GM12878 (cell line): ENCODE measurements at regions of chr10 and their contacts with region 1.

Region 1: DNA sequence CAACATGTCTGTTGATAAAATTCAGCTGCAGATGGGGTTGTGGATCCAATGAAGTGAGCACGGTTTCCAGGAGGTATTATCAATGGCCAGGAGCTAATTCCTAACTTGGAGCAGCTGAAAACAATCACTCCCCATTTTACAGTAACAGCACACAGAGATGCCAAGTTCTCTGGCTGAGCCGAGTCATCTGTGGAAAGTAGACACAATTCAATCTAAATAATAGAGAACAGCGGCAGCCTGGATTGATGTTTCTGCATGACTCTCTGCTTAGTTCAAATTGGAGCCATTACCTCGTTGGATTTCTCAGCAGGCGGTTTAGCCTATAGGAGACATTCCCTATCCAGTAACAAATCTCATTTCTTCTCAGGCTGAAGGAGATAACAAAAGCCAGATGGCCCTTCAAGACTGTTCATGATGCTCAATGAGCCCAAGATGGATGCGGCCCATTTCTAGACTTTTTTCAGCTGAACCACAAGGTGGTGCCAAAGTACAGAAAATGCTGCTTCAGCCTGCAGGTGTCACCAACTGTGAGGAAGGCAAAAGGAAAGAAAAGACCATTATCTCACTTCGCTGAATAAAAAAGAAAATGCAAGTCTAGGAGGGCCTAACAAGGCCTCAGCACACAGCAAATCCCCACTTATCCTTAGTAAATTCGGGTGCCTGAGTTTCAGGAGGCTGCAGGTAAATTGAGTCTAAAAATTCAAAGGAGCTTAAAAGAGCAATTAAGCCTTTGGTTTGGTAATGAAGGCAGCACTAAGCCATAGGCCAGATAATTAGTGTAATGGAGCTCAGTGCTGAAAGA is 83.7 kb downstream of the SLC16A9 start:
- DNase-seq: peak; percentile 35
- ATAC-seq: peak; percentile 96
- H3K4me3 ChIP-seq: no peak overlapping the region
- H3K27ac ChIP-seq: no peak overlapping the region
- H3K4me1 ChIP-seq: no peaks in the 10 kb centered on the region; the same call in 1 of the 2 replicates
- H3K27me3 ChIP-seq: no peaks in the 10 kb centered on the region
- CTCF ChIP-seq: peak; percentile 66 to 93 (median 80); a peak in 5 of 6 replicates
- EP300 ChIP-seq: no peak
- POLR2A ChIP-seq: no peak
- RAD21 ChIP-seq: peak; percentile 100

Region 2: GRCh38 chr10:58781873-58782488 is 843.9 kb before region 1 on chr10:
- CTCF ChIA-PET with region 1: interaction called, 53 read pairs
- POLR2A ChIA-PET with region 1: no interaction called
- RAD21 ChIA-PET with region 1: interaction called, 3 read pairs
- SMC1A ChIA-PET with region 1: interaction called, 26 read pairs
- in situ Hi-C with region 1: no loop called
- intact Hi-C with region 1: loop called (anchors 1 kb)
- DNase-seq: peak; percentile 8
- ATAC-seq: peak; percentile 77
- H3K4me3 ChIP-seq: no peak overlapping the region
- H3K27ac ChIP-seq: no peak overlapping the region
- H3K4me1 ChIP-seq: no peaks in the 10 kb centered on the region
- H3K27me3 ChIP-seq: no peaks in the 10 kb centered on the region
- CTCF ChIP-seq: peak in 2 of 3 experiments; percentile 47 to 70; a peak in 4 of 6 replicates
- EP300 ChIP-seq: no peak
- POLR2A ChIP-seq: no peak
- RAD21 ChIP-seq: peak; percentile 77

Region 3: DNA sequence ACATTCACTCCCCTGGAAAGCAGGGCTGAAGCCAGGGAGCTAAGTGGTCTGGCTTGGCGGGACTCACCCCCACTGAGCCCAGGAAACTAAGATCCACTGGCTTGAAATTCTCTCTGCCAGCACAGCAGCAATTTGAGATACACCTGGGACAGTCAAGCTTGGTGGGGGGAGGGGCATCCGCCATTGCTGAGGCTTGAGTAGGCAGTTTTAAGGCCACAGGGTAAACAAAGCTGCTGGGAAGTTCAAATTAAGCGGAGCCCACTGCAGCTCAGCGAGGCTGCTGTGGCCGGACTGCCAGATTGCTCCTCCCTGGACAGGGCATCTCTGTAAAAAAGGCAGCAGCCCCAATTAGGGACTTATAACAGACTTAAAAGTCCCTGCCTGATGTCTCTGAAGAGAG is 155.4 kb before region 1 on chr10:
- CTCF ChIA-PET with region 1: no interaction called
- POLR2A ChIA-PET with region 1: no interaction called
- RAD21 ChIA-PET with region 1: no interaction called
- SMC1A ChIA-PET with region 1: no interaction called
- in situ Hi-C with region 1: no loop called
- intact Hi-C with region 1: no loop called
- DNase-seq: no peak
- ATAC-seq: no peak
- H3K4me3 ChIP-seq: no peak overlapping the region
- H3K27ac ChIP-seq: no peak overlapping the region
- H3K4me1 ChIP-seq: no peaks in the 10 kb centered on the region
- H3K27me3 ChIP-seq: no peaks in the 10 kb centered on the region
- CTCF ChIP-seq: no peak
- EP300 ChIP-seq: no peak
- POLR2A ChIP-seq: no peak
- RAD21 ChIP-seq: no peak

Region 4: GRCh38 chr10:59808896-59809643 is 183.1 kb after region 1 on chr10:
- CTCF ChIA-PET with region 1: interaction called, 8 read pairs
- POLR2A ChIA-PET with region 1: no interaction called
- RAD21 ChIA-PET with region 1: interaction called, 6 read pairs
- SMC1A ChIA-PET with region 1: interaction called, 3 read pairs
- in situ Hi-C with region 1: loop called (anchors 5 kb)
- intact Hi-C with region 1: loop called (anchors 1 kb)
- DNase-seq: peak; percentile 28
- ATAC-seq: peak; percentile 96
- H3K4me3 ChIP-seq: no peak overlapping the region
- H3K27ac ChIP-seq: no peak overlapping the region
- H3K4me1 ChIP-seq: no peaks in the 10 kb centered on the region
- H3K27me3 ChIP-seq: no peaks in the 10 kb centered on the region
- CTCF ChIP-seq: peak; percentile 72 to 81 (median 78)
- EP300 ChIP-seq: no peak
- POLR2A ChIP-seq: no peak
- RAD21 ChIP-seq: peak; percentile 81

Region 5: GRCh38 chr10:59906417-59907202 is 280.7 kb after region 1 on chr10 and contains the start of gene CCDC6:
- CTCF ChIA-PET with region 1: interaction called, 15 read pairs
- POLR2A ChIA-PET with region 1: no interaction called
- RAD21 ChIA-PET with region 1: interaction called, 8 read pairs
- SMC1A ChIA-PET with region 1: interaction called, 5 read pairs
- in situ Hi-C with region 1: no loop called
- intact Hi-C with region 1: loop called (anchors 2 kb)
- DNase-seq: no peak
- ATAC-seq: peak; percentile 86
- H3K4me3 ChIP-seq: peak within 1 kb of the TSS; percentile 94
- H3K27ac ChIP-seq: peak within 1 kb of the TSS; percentile 88
- H3K4me1 ChIP-seq: peaks cover 8% of the 10 kb centered on the region; the same call in 1 of the 2 replicates
- H3K27me3 ChIP-seq: no peaks in the 10 kb centered on the region
- CTCF ChIP-seq: peak; percentile 63 to 84 (median 83)
- EP300 ChIP-seq: 0 out of 4 replicates have a peak, but pooled peaks of 1 of the 2 experiments have one; percentile 8
- POLR2A ChIP-seq: peak; percentile 86
- RAD21 ChIP-seq: peak; percentile 88
- polyA plus RNA-seq, gene CCDC6: 11.8 to 12.3 TPM

Region 6: GRCh38 chr10:60099998-60100747 is 474.3 kb after region 1 on chr10:
- CTCF ChIA-PET with region 1: interaction called, 7 read pairs
- POLR2A ChIA-PET with region 1: no interaction called
- RAD21 ChIA-PET with region 1: no interaction called
- SMC1A ChIA-PET with region 1: interaction called, 4 read pairs
- in situ Hi-C with region 1: no loop called
- intact Hi-C with region 1: loop called (anchors 5 kb)
- DNase-seq: no peak
- ATAC-seq: peak; percentile 73
- H3K4me3 ChIP-seq: no peak overlapping the region
- H3K27ac ChIP-seq: no peak overlapping the region
- H3K4me1 ChIP-seq: peaks cover 9% of the 10 kb centered on the region
- H3K27me3 ChIP-seq: no peaks in the 10 kb centered on the region
- CTCF ChIP-seq: peak; percentile 51 to 55 (median 54); a peak in 5 of 6 replicates
- EP300 ChIP-seq: no peak
- POLR2A ChIP-seq: no peak
- RAD21 ChIP-seq: peak; percentile 66

Region 7: DNA sequence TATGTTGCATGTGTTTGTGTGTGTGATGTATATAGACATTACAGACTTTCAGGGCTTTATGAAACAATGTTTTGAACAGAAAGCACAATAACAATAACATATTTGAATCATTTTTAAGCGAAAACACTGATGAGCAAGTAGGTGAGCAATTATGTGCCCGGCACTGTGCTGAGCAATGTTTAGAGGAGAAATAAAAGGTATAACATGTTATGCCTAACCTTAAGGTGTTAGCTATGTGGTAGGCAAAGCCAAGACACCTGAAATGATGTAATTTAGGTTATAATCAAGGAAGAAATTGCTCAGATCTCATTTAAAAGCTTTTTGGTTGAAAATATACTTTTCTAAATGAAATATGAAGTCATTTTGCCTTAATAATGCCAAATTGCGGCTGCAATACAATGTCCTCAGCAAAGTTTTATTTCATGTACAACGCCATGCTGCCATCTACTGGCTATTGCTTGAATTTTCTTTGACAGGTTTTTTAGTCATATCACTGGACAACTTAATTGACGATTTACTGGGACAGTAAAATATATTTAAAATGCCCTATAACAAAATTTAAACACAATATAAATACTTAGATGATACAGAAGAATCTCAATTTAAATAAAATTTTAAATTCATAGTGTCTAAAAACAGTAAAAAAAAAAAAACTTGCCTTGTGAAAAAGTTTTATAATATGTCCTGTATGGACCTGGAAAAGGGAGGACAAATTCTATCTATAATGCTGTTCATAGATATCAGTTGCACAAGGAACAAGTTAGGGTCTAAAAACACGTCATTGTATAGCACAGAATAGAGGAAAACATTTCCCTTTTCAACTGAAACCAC is 1021.3 kb after region 1 on chr10:
- CTCF ChIA-PET with region 1: no interaction called
- POLR2A ChIA-PET with region 1: no interaction called
- RAD21 ChIA-PET with region 1: no interaction called
- SMC1A ChIA-PET with region 1: interaction called, 3 read pairs
- in situ Hi-C with region 1: no loop called
- intact Hi-C with region 1: loop called (anchors 5 kb)
- DNase-seq: peak; percentile 17
- ATAC-seq: peak; percentile 78
- H3K4me3 ChIP-seq: no peak overlapping the region
- H3K27ac ChIP-seq: no peak overlapping the region
- H3K4me1 ChIP-seq: no peaks in the 10 kb centered on the region
- H3K27me3 ChIP-seq: no peaks in the 10 kb centered on the region
- CTCF ChIP-seq: peak; percentile 59 to 72 (median 59)
- EP300 ChIP-seq: no peak
- POLR2A ChIP-seq: no peak
- RAD21 ChIP-seq: peak; percentile 77